ENCODE measurements at regions of chr9 and their contacts with region 1.

Region 1: DNA sequence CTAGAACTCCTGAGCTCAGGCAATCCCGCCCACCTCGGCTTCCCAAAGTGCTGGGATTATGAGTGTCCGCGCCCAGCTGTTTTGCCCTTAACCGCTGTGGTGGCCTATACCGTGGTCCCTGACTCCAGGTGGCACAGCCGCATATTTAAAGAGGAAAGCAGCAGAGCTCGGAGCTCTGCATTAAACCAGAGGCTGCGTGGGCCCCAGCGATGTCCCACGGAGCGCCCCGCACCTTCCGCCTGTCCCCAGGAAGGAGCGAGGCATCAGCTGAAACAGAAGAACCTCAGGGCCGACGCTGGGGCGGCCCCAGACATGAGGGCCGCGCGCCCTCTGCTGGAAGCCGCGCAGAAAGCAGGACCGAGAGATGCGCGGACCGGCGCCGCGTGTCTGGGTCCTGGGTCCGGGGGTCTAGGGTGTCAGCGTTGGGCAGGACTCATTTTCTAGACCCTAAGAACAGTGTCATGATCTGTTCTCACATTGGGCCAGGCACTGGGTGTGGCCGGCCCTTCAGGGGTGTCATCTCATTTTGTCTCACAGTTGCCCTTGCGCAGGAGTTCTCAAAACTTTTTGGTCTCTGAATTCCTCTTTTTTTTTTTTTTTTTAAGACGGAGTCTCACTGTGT is 37.7 kb downstream of the LAMC3 start:
- DNase-seq: peak; percentile 49
- ATAC-seq: peak; percentile 98
- H3K4me3 ChIP-seq: no peak overlapping the region
- H3K27ac ChIP-seq: no peak overlapping the region
- H3K4me1 ChIP-seq: no peaks in the 10 kb centered on the region; the same call in 1 of the 2 replicates
- H3K27me3 ChIP-seq: peaks cover 17% of the 10 kb centered on the region
- CTCF ChIP-seq: peak; percentile 88
- POLR2A ChIP-seq: no peak
- RAD21 ChIP-seq: peak; percentile 89

Region 2: GRCh38 chr9:130701056-130702022 is 345.4 kb before region 1 on chr9:
- CTCF ChIA-PET with region 1: interaction called, 12 read pairs
- POLR2A ChIA-PET with region 1: no interaction called
- dilution Hi-C with region 1: no loop called
- in situ Hi-C with region 1: loop called (anchors 10 kb)
- intact Hi-C with region 1: loop called (anchors 2 kb)
- DNase-seq: peak; percentile 88
- ATAC-seq: peak; percentile 94
- H3K4me3 ChIP-seq: no peak overlapping the region
- H3K27ac ChIP-seq: no peak overlapping the region; the same call in 1 of the 2 replicates
- H3K4me1 ChIP-seq: peaks cover 17% of the 10 kb centered on the region
- H3K27me3 ChIP-seq: no peaks in the 10 kb centered on the region
- CTCF ChIP-seq: peak; percentile 96
- POLR2A ChIP-seq: no peak
- RAD21 ChIP-seq: peak; percentile 90

Region 3: DNA sequence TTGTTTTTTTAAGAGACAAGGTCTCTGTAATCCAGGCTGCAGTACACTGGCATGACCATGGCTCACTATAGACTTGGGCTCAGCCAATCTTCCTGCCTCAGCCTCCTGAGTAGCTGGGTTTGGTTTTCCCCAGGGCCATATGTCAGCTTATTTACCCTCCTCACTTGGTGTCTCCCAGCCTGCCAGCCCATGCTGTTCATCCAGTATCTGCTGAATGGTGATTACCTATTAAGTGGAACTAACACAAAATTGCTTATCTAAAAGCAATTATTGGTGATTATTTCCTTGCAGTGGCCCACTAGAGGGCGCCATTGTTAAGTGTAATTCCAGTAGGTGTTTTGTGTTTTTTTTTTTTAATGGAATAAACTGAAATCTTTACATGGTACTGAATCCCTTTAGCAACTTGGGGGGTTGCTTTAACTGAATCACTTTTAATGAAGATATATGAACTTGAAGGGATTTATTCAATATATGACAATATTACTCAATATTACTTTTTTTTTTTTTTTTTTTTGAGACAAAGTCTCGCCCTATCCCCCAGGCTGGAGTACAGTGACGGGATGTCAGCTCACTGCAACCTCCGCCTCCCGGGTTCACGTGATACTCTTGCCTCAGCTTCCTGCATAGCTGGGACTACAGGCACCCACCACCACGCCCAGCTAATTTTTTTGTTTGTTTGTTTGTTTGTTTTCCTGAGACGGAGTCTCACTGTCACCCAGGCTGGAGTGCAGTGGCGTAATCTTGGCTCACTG is 339.3 kb before region 1 on chr9:
- CTCF ChIA-PET with region 1: no interaction called
- POLR2A ChIA-PET with region 1: no interaction called
- dilution Hi-C with region 1: no loop called
- in situ Hi-C with region 1: loop called (anchors 10 kb)
- intact Hi-C with region 1: loop called (anchors 2 kb)
- DNase-seq: peak; percentile 68
- ATAC-seq: peak; percentile 64
- H3K4me3 ChIP-seq: no peak overlapping the region
- H3K27ac ChIP-seq: no peak overlapping the region
- H3K4me1 ChIP-seq: peaks cover 4% of the 10 kb centered on the region; the same call in 1 of the 2 replicates
- H3K27me3 ChIP-seq: no peaks in the 10 kb centered on the region
- CTCF ChIP-seq: peak; percentile 84
- POLR2A ChIP-seq: peak; percentile 36; the same call in 1 of the 2 replicates
- RAD21 ChIP-seq: peak; percentile 81

Region 4: GRCh38 chr9:130794923-130795495 is 251.7 kb before region 1 on chr9:
- CTCF ChIA-PET with region 1: no interaction called
- POLR2A ChIA-PET with region 1: no interaction called
- dilution Hi-C with region 1: no loop called
- in situ Hi-C with region 1: no loop called
- intact Hi-C with region 1: no loop called
- DNase-seq: no peak
- ATAC-seq: peak; percentile 42
- H3K4me3 ChIP-seq: no peak overlapping the region
- H3K27ac ChIP-seq: peak overlapping the region; percentile 50; the same call in 1 of the 2 replicates
- H3K4me1 ChIP-seq: peaks cover 11% of the 10 kb centered on the region
- H3K27me3 ChIP-seq: no peaks in the 10 kb centered on the region
- CTCF ChIP-seq: no peak
- POLR2A ChIP-seq: no peak
- RAD21 ChIP-seq: no peak

Region 5: DNA sequence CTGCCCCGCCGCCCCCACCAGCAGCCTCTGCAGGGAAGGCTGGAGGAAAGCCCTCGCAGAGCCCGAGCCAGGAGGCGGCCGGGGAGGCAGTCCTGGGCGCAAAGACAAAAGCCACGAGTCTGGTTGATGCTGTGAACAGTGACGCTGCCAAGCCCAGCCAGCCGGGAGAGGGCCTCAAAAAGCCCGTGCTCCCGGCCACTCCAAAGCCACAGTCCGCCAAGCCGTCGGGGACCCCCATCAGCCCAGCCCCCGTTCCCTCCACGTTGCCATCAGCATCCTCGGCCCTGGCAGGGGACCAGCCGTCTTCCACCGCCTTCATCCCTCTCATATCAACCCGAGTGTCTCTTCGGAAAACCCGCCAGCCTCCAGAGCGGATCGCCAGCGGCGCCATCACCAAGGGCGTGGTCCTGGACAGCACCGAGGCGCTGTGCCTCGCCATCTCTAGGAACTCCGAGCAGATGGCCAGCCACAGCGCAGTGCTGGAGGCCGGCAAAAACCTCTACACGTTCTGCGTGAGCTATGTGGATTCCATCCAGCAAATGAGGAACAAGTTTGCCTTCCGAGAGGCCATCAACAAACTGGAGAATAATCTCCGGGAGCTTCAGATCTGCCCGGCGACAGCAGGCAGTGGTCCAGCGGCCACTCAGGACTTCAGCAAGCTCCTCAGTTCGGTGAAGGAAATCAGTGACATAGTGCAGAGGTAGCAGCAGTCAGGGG is 161.6 kb before region 1 on chr9:
- CTCF ChIA-PET with region 1: no interaction called
- POLR2A ChIA-PET with region 1: no interaction called
- dilution Hi-C with region 1: no loop called
- in situ Hi-C with region 1: loop called (anchors 5 kb)
- intact Hi-C with region 1: loop called (anchors 5 kb)
- DNase-seq: no peak
- ATAC-seq: no peak
- H3K4me3 ChIP-seq: no peak overlapping the region
- H3K27ac ChIP-seq: no peak overlapping the region
- H3K4me1 ChIP-seq: peaks cover 15% of the 10 kb centered on the region; the same call in 1 of the 2 replicates
- H3K27me3 ChIP-seq: no peaks in the 10 kb centered on the region
- CTCF ChIP-seq: no peak
- POLR2A ChIP-seq: no peak
- RAD21 ChIP-seq: no peak

Region 6: DNA sequence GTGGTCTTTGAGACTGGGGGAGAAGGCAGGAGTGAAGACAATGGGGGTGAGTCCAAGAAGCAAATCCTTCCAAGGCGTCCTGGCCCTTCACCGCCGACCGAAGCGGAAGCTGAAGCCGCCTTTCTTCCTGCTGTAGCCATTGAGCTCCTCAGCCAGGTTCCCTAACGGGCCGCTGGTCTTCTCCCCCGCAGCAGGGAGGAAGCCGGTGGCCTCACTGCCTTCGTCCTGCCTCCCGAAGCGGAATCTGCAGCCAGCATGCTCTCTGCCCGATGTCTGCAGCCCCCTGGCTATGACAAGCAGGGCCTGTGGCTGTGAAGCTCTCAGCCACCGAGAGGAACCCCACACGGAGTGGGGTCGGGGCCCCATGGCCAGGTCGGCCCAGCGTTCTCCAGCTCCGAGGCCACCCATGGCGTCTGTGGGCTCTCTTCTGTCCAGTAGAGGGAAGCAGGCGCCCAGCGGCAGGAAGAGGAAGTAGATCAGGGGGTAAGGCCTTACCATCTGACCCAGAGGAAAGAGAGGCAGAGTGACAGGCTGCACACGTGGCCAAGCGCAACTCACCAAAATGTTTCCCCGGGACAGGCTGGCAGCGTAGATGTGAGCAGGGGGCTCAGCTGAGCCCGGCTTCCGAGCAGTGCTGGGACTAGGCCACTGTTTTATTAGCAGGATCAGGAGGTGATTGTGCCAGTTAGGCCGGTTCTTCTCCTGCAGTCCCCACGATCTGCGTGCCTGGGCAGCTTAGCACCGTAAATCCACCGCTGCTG is 153.2 kb before region 1 on chr9:
- CTCF ChIA-PET with region 1: no interaction called
- POLR2A ChIA-PET with region 1: no interaction called
- dilution Hi-C with region 1: no loop called
- in situ Hi-C with region 1: loop called (anchors 5 kb)
- intact Hi-C with region 1: loop called (anchors 5 kb)
- DNase-seq: no peak
- ATAC-seq: peak; percentile 22; the same call in 1 of the 2 replicates
- H3K4me3 ChIP-seq: no peak overlapping the region
- H3K27ac ChIP-seq: no peak overlapping the region
- H3K4me1 ChIP-seq: no peaks in the 10 kb centered on the region
- H3K27me3 ChIP-seq: no peaks in the 10 kb centered on the region
- CTCF ChIP-seq: 0 out of 2 replicates have a peak, but pooled peaks have one; percentile 16
- POLR2A ChIP-seq: no peak
- RAD21 ChIP-seq: peak; percentile 30; the same call in 1 of the 2 replicates

Measured in IMR-90 (cell line).